ENCODE measurements at regions of chr4 and their contacts with region 1.

Region 1: GRCh38 chr4:61918507-61919473 is 718.7 kb downstream of the ADGRL3 start:
- DNase-seq: no peak
- ATAC-seq: peak; percentile 60
- H3K4me3 ChIP-seq: no peak overlapping the region
- H3K27ac ChIP-seq: no peak overlapping the region
- H3K4me1 ChIP-seq: no peaks in the 10 kb centered on the region
- H3K27me3 ChIP-seq: no peaks in the 10 kb centered on the region
- CTCF ChIP-seq: no peak
- EP300 ChIP-seq: no peak
- POLR2A ChIP-seq: no peak
- RAD21 ChIP-seq: no peak

Region 2: DNA sequence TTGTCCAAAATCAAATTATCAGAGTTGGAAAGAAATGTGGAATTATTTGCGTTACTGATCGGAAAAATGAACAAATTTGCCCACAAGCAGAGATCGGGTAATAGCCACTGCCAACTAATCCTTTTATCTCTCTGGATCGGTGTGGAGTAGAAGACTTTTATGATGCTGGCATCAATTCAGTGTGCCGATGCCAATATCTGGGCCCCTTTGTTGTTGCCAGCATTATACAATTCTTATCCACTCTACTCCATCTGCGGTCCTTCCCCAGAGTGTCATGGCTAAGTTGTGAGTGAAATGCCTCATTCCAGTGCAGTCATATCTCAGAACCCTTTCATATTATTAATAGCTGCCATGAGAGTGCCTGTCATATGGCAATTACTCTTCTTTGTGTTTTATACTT is 58.4 kb before region 1 on chr4:
- CTCF ChIA-PET with region 1: interaction called, 5 read pairs
- POLR2A ChIA-PET with region 1: no interaction called
- RAD21 ChIA-PET with region 1: interaction called, 5 read pairs
- SMC1A ChIA-PET with region 1: interaction called, 12 read pairs
- in situ Hi-C with region 1: no loop called
- intact Hi-C with region 1: no loop called
- DNase-seq: no peak
- ATAC-seq: no peak
- H3K4me3 ChIP-seq: no peak overlapping the region
- H3K27ac ChIP-seq: no peak overlapping the region
- H3K4me1 ChIP-seq: no peaks in the 10 kb centered on the region
- H3K27me3 ChIP-seq: no peaks in the 10 kb centered on the region
- CTCF ChIP-seq: no peak
- EP300 ChIP-seq: no peak
- POLR2A ChIP-seq: no peak
- RAD21 ChIP-seq: no peak

Region 3: DNA sequence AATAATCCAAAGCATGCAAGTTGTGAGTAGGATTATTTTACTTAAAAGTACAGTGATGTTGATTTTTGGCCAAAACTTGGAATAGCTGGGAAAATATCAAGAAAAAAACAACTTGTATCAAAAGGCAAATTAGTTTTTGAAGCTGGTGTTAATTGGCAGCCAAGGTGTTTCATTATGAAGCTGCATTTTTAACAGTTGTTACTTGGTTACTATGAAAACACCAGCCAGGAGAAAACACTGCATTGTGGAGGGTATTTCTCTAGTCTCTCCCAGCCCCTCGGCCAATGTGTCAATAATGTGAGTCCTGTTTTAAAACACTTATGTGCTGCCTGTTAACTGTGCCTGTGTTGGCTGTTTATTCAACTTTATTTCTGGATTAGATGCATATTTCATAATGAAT is 14.7 kb after region 1 on chr4:
- CTCF ChIA-PET with region 1: interaction called, 38 read pairs
- POLR2A ChIA-PET with region 1: no interaction called
- RAD21 ChIA-PET with region 1: interaction called, 7 read pairs
- SMC1A ChIA-PET with region 1: interaction called, 20 read pairs
- in situ Hi-C with region 1: no loop called
- intact Hi-C with region 1: no loop called
- DNase-seq: no peak
- ATAC-seq: no peak
- H3K4me3 ChIP-seq: no peak overlapping the region
- H3K27ac ChIP-seq: no peak overlapping the region
- H3K4me1 ChIP-seq: no peaks in the 10 kb centered on the region
- H3K27me3 ChIP-seq: no peaks in the 10 kb centered on the region; a peak in 1 of 4 replicates
- CTCF ChIP-seq: no peak
- EP300 ChIP-seq: no peak
- POLR2A ChIP-seq: no peak
- RAD21 ChIP-seq: no peak